ENCODE measurements at regions of chr15 and their contacts with region 1.

Region 1: GRCh38 chr15:56491110-56491722 is 26.3 kb upstream of the MNS1 start:
- DNase-seq: peak; percentile 55 to 67
- H3K4me3 ChIP-seq: no peak overlapping the region
- H3K4me3 Mint-ChIP-seq: no peak overlapping the region
- H3K27ac Mint-ChIP-seq: no peak overlapping the region
- H3K4me1 ChIP-seq: no peaks in the 10 kb centered on the region
- H3K4me1 Mint-ChIP-seq: peaks cover 7% of the 10 kb centered on the region
- H3K27me3 ChIP-seq: no peaks in the 10 kb centered on the region
- H3K27me3 Mint-ChIP-seq: peaks cover 10% of the 10 kb centered on the region
- CTCF ChIP-seq: peak; percentile 74 to 85

Region 2: DNA sequence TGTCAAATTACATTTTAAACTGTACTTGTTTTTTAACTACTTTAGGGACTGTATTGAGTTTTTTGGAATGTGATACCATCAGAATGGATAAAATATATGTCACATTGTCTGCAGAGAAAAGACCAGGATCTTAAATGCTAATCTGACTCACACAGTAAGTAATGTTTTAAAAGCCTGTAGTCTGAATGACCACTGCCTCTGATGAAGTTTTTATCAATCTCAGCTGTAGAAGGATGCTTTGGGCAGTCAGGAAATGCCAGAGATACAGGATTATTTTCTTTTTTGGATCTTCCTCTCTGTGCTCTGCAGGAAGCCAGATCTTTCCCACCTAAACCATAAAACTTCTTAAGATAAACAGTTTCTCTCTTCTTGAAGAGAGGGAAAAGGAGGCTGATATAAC is 675.2 kb before region 1 on chr15:
- CTCF ChIA-PET with region 1: no interaction called
- POLR2A ChIA-PET with region 1: no interaction called
- intact Hi-C with region 1: no loop called
- DNase-seq: no peak
- H3K4me3 ChIP-seq: no peak overlapping the region
- H3K4me3 Mint-ChIP-seq: no peak overlapping the region
- H3K27ac Mint-ChIP-seq: no peak overlapping the region
- H3K4me1 ChIP-seq: no peaks in the 10 kb centered on the region
- H3K4me1 Mint-ChIP-seq: no peaks in the 10 kb centered on the region
- H3K27me3 ChIP-seq: no peaks in the 10 kb centered on the region
- H3K27me3 Mint-ChIP-seq: no peaks in the 10 kb centered on the region
- CTCF ChIP-seq: no peak

Region 3: GRCh38 chr15:56390739-56391267 is 100.4 kb before region 1 on chr15:
- CTCF ChIA-PET with region 1: no interaction called
- POLR2A ChIA-PET with region 1: no interaction called
- intact Hi-C with region 1: no loop called
- DNase-seq: no peak
- H3K4me3 ChIP-seq: no peak overlapping the region
- H3K4me3 Mint-ChIP-seq: no peak overlapping the region
- H3K27ac Mint-ChIP-seq: no peak overlapping the region
- H3K4me1 ChIP-seq: no peaks in the 10 kb centered on the region
- H3K4me1 Mint-ChIP-seq: no peaks in the 10 kb centered on the region
- H3K27me3 ChIP-seq: no peaks in the 10 kb centered on the region
- H3K27me3 Mint-ChIP-seq: no peaks in the 10 kb centered on the region
- CTCF ChIP-seq: no peak

Region 4: DNA sequence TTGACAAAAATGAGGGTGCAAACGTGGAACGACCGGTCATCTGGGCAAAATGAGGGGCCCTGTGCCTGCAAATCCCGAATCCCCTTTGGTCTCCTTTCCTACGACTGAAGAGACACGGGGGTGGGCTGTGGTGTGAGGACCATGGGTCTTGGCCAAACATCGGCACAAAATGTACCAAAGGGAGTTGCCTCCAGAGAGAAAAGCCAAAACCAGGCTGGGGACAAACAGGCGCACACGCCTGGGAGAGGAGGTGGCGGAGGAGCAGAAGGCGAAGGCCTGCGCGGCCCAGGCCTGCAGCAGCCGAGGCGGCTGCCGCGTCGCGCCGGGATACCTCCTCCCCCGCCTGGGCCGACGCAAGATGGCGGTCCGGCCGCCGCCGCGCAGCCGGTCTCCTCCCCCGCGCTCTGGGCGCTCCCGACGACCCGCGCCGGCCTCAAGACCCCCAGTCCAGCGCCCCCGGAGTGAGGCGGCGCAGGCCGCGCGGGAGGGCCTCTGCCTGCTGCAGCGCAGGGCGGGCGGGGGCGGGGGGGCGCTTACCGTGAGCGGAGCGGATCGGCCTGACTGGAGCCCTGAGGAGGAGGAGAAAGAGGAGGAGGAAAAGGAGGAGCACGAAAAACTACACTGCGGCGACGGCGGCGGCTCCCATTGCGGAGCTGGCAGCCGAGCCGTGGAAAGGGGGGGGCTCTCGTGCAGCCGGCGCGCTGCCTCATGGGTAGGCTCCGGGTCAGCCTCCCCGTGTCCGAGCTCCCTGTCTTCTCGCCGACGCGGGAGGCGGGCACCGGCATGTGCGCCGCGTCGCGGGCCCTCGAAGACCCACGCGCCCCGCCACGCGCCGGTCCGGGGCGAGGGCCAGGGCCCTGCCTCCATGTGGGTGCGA is 241.9 kb after region 1 on chr15 and contains the start of gene ZNF280D:
- CTCF ChIA-PET with region 1: no interaction called
- POLR2A ChIA-PET with region 1: no interaction called
- intact Hi-C with region 1: loop called (anchors 10 kb)
- DNase-seq: peak; percentile 89
- H3K4me3 ChIP-seq: peak within 1 kb of the TSS; percentile 76
- H3K4me3 Mint-ChIP-seq: peak within 1 kb of the TSS; percentile 100
- H3K27ac Mint-ChIP-seq: peak within 1 kb of the TSS; percentile 99
- H3K4me1 ChIP-seq: peaks cover 16% of the 10 kb centered on the region
- H3K4me1 Mint-ChIP-seq: no peaks in the 10 kb centered on the region
- H3K27me3 ChIP-seq: no peaks in the 10 kb centered on the region
- H3K27me3 Mint-ChIP-seq: no peaks in the 10 kb centered on the region
- CTCF ChIP-seq: no peak
- total RNA-seq, gene ZNF280D: 28.7 and 31.0 TPM in 2 replicates

Region 5: GRCh38 chr15:56869573-56869972 is 378.4 kb after region 1 on chr15:
- CTCF ChIA-PET with region 1: interaction called, 7 read pairs
- POLR2A ChIA-PET with region 1: no interaction called
- intact Hi-C with region 1: loop called (anchors 1 kb)
- DNase-seq: peak; percentile 31 to 35
- H3K4me3 ChIP-seq: no peak overlapping the region
- H3K4me3 Mint-ChIP-seq: no peak overlapping the region
- H3K27ac Mint-ChIP-seq: no peak overlapping the region
- H3K4me1 ChIP-seq: no peaks in the 10 kb centered on the region
- H3K4me1 Mint-ChIP-seq: peaks cover 7% of the 10 kb centered on the region
- H3K27me3 ChIP-seq: no peaks in the 10 kb centered on the region
- H3K27me3 Mint-ChIP-seq: no peaks in the 10 kb centered on the region
- CTCF ChIP-seq: no peak

Region 6: GRCh38 chr15:57138349-57138788 is 647.2 kb after region 1 on chr15:
- CTCF ChIA-PET with region 1: no interaction called
- POLR2A ChIA-PET with region 1: no interaction called
- intact Hi-C with region 1: loop called (anchors 10 kb)
- DNase-seq: peak; percentile 60 to 72
- H3K4me3 ChIP-seq: no peak overlapping the region
- H3K4me3 Mint-ChIP-seq: no peak overlapping the region
- H3K27ac Mint-ChIP-seq: no peak overlapping the region
- H3K4me1 ChIP-seq: no peaks in the 10 kb centered on the region
- H3K4me1 Mint-ChIP-seq: peaks cover 2% of the 10 kb centered on the region
- H3K27me3 ChIP-seq: no peaks in the 10 kb centered on the region
- H3K27me3 Mint-ChIP-seq: no peaks in the 10 kb centered on the region
- CTCF ChIP-seq: peak; percentile 84 to 87

Region 7: DNA sequence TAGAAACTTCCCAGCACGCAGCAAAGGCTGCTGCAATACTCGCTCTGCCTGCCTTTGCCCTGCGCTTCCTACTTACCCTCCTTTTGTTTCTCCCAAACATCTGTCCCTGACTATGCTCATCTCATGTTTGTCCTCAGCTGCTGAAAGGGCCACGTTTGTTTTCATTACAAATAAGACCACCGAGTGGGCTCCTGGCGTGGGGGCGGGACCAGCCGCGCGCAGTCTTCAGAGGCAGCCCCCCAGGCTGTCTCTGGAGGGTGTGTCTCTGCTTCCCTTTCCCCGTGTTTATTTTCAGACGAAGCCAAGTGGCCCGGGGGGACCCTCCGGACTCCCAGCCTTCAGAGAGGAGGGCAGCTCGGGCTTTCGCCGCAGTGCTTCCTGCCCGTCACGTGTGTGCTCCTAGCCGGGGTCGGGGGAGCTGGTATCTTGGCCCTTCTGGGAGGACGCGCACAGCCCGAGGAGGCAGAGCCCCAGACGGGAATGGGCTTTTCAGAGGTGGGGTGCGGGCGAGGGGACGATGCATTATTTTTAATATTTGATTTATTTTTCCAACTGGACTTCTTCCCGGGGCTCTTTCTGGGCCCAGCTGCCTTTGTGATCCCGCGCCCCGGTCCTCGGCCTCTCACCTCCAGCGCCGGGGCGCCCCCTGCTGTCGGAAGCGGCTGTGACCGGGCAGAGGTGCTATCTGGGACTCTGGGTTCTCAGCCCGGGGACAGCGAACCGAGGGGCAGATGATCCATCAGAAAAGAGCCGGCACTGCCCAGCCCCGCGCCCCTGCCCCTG is 815.1 kb after region 1 on chr15:
- CTCF ChIA-PET with region 1: no interaction called
- POLR2A ChIA-PET with region 1: no interaction called
- intact Hi-C with region 1: loop called (anchors 10 kb)
- DNase-seq: peak in 1 of 2 experiments; percentile 62
- H3K4me3 ChIP-seq: no peak overlapping the region
- H3K4me3 Mint-ChIP-seq: no peak overlapping the region
- H3K27ac Mint-ChIP-seq: no peak overlapping the region
- H3K4me1 ChIP-seq: peaks cover 14% of the 10 kb centered on the region
- H3K4me1 Mint-ChIP-seq: peaks cover 14% of the 10 kb centered on the region
- H3K27me3 ChIP-seq: no peaks in the 10 kb centered on the region
- H3K27me3 Mint-ChIP-seq: no peaks in the 10 kb centered on the region
- CTCF ChIP-seq: peak; percentile 8 to 39

Region 8: DNA sequence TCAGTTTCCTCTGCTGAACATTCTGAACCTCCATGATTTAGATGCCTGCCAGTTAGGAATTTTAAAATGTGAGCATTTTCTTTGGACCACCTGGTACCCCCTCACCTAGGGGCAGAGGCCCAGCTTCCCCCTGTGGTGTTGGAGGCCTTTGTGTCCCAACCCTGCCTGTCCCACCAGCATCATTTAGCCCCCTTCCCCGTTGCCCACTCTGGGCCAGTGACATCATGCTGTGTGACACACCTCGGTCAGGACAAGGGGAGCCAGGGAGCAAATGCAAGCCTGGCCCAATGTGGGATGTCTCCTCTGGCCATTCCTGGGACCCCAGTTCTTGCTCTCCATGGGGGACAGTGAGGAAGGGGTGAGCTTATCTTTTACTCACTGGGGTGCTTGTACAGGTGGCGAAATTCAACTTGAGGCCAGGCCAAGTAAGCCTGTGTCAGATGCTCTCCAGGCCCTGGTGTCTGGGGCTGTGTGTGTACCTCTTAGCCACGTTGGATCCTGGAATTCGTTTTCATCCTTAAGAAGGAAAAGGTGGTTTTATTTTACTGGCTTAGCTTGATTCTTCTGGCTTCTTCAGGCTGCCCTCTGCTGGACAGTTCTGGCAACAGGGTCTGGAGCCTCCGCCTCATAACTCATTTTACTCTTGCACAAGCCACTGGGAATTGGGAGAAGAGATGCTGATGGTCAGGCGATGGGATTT is 1050.7 kb after region 1 on chr15:
- CTCF ChIA-PET with region 1: no interaction called
- POLR2A ChIA-PET with region 1: no interaction called
- intact Hi-C with region 1: loop called (anchors 5 kb)
- DNase-seq: peak; percentile 74 to 80
- H3K4me3 ChIP-seq: no peak overlapping the region
- H3K4me3 Mint-ChIP-seq: no peak overlapping the region
- H3K27ac Mint-ChIP-seq: no peak overlapping the region
- H3K4me1 ChIP-seq: 0 out of 2 replicates have a peak, but pooled peaks cover 3% of the 10 kb centered on the region
- H3K4me1 Mint-ChIP-seq: peaks cover 6% of the 10 kb centered on the region
- H3K27me3 ChIP-seq: no peaks in the 10 kb centered on the region
- H3K27me3 Mint-ChIP-seq: no peaks in the 10 kb centered on the region
- CTCF ChIP-seq: peak; percentile 76 to 84